ENCODE measurements at regions of chr3 and their contacts with region 1.

Region 1: GRCh38 chr3:4350789-4351163 is 47.6 kb downstream of the SETMAR start:
- DNase-seq: peak; percentile 79
- H3K4me3 Mint-ChIP-seq: peak overlapping the region; percentile 69
- H3K27ac Mint-ChIP-seq: peak overlapping the region; percentile 61
- H3K4me1 Mint-ChIP-seq: peaks cover 23% of the 10 kb centered on the region
- H3K27me3 Mint-ChIP-seq: no peaks in the 10 kb centered on the region

Region 2: GRCh38 chr3:4340411-4341335 is 10.1 kb before region 1 on chr3:
- CTCF ChIA-PET with region 1: interaction called, 13 read pairs
- POLR2A ChIA-PET with region 1: no interaction called
- DNase-seq: no peak
- H3K4me3 Mint-ChIP-seq: no peak overlapping the region
- H3K27ac Mint-ChIP-seq: no peak overlapping the region
- H3K4me1 Mint-ChIP-seq: peaks cover 6% of the 10 kb centered on the region
- H3K27me3 Mint-ChIP-seq: no peaks in the 10 kb centered on the region

Region 3: GRCh38 chr3:4421121-4421520 is 70.3 kb after region 1 on chr3:
- CTCF ChIA-PET with region 1: interaction called, 12 read pairs
- POLR2A ChIA-PET with region 1: no interaction called
- DNase-seq: no peak
- H3K4me3 Mint-ChIP-seq: no peak overlapping the region
- H3K27ac Mint-ChIP-seq: no peak overlapping the region
- H3K4me1 Mint-ChIP-seq: peaks cover 6% of the 10 kb centered on the region
- H3K27me3 Mint-ChIP-seq: no peaks in the 10 kb centered on the region

Region 4: GRCh38 chr3:4493014-4493940 is 142.5 kb after region 1 on chr3 and contains the start of gene ITPR1:
- CTCF ChIA-PET with region 1: interaction called, 17 read pairs
- POLR2A ChIA-PET with region 1: no interaction called
- DNase-seq: peak; percentile 100
- H3K4me3 Mint-ChIP-seq: peak within 1 kb of the TSS; percentile 91
- H3K27ac Mint-ChIP-seq: peak within 1 kb of the TSS; percentile 93
- H3K4me1 Mint-ChIP-seq: peaks cover 40% of the 10 kb centered on the region
- H3K27me3 Mint-ChIP-seq: peaks cover 27% of the 10 kb centered on the region
- total RNA-seq, gene ITPR1: 42.3 to 44.7 TPM

Measured in activated CD4-positive, alpha-beta T cell treated with anti-CD3 and anti-CD28 coated beads, Interleukin-2, amount 10 ng/mL, durations not matched to agents 7 days and 5 days (primary cell).